A673 (cell line): ENCODE measurements at regions of chr13 and their contacts with region 1.

Region 1: GRCh38 chr13:40292108-40292507 is 374.3 kb downstream of the FOXO1 start:
- DNase-seq: no peak
- H3K4me3 ChIP-seq: no peak overlapping the region
- H3K27ac ChIP-seq: no peak overlapping the region
- H3K4me1 ChIP-seq: no peaks in the 10 kb centered on the region
- H3K27me3 ChIP-seq: no peaks in the 10 kb centered on the region
- CTCF ChIP-seq: no peak

Region 2: DNA sequence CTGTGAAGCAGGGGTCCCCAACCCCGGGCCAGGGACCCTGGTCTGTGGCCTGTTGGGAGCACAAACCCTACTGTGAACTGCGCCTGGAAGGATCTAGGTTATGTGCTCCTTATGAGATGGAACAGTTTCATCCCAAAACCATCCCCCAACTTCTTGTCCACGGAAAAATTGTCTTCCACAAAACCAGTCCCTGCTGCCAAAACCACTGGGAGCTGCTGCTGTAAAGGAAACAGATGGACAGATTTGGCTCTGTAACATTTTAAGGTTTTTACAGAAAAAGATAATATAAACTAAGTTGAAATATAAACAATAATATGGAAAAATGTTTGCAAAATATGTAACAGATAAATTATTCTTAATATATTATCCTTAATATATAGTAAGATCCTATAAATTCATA is 563.0 kb before region 1 on chr13:
- CTCF ChIA-PET with region 1: no interaction called
- POLR2A ChIA-PET with region 1: no interaction called
- intact Hi-C with region 1: no loop called
- DNase-seq: no peak
- H3K4me3 ChIP-seq: no peak overlapping the region
- H3K27ac ChIP-seq: no peak overlapping the region
- H3K4me1 ChIP-seq: no peaks in the 10 kb centered on the region
- H3K27me3 ChIP-seq: no peaks in the 10 kb centered on the region
- CTCF ChIP-seq: no peak

Region 3: GRCh38 chr13:40235160-40235796 is 56.8 kb before region 1 on chr13:
- CTCF ChIA-PET with region 1: no interaction called
- POLR2A ChIA-PET with region 1: interaction called, 10 read pairs
- intact Hi-C with region 1: no loop called
- DNase-seq: no peak
- H3K4me3 ChIP-seq: no peak overlapping the region
- H3K27ac ChIP-seq: no peak overlapping the region
- H3K4me1 ChIP-seq: no peaks in the 10 kb centered on the region
- H3K27me3 ChIP-seq: no peaks in the 10 kb centered on the region
- CTCF ChIP-seq: no peak